Lower leg skin (tissue), 4 donors: ENCODE measurements at regions of chr12 and their contacts with region 1.

Region 1: DNA sequence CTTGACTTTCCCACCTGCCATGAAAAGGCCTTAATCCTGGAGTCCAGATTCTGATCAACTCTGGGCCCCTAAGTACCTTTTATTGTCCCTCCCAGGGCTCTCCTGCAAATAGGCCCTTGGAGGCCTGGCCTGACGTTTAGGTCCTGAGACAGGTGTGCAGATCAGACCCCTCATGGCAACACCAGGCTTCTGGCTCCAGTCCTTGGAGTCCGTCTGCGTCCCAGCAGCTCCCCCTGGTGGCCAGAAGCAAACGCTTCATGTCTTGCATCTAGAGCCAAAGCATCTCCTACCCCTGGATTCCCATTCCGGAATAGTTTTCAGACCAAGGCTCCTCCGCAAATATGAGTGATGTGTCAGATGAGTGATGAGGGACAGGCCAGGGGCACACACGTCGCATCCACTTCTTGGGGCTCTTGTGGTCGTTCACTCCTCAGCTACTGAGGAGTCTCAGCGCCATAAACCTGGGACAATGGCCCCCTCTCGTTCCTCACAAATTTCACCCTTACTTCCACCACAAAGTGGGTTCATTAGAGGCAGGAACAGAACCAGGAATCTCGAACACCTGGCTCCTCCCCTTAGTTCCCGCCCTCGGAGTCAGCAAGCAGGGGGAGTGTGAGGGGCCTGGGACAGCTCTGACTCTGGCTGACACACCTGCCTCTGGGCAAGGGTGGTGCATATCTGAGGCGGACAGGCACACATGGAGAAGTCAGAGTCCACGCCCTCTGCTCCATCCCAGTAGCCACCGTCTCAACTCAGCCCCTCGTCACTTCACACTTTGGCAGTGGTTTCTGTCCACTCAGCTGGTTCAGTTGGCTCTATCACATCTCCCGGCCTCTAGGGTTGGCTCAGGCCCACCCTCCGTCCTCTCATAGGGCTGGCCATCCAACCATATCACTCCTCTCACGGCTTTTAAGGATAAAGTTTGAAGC is 77.9 kb upstream of the PWP1 start:
- DNase-seq: peak; percentile 47 to 94
- H3K4me3 ChIP-seq: no peak overlapping the region
- CTCF ChIP-seq: peak in 1 of 3 donors; percentile 84
- POLR2A ChIP-seq: no peak

Region 2: GRCh38 chr12:107131832-107132616 is 475.7 kb before region 1 on chr12:
- intact Hi-C with region 1: loop called (anchors 2 kb)
- DNase-seq: peak in 1 of 2 donors; percentile 20
- H3K4me3 ChIP-seq: no peak overlapping the region
- CTCF ChIP-seq: peak in 1 of 3 donors; percentile 44
- POLR2A ChIP-seq: no peak

Region 3: DNA sequence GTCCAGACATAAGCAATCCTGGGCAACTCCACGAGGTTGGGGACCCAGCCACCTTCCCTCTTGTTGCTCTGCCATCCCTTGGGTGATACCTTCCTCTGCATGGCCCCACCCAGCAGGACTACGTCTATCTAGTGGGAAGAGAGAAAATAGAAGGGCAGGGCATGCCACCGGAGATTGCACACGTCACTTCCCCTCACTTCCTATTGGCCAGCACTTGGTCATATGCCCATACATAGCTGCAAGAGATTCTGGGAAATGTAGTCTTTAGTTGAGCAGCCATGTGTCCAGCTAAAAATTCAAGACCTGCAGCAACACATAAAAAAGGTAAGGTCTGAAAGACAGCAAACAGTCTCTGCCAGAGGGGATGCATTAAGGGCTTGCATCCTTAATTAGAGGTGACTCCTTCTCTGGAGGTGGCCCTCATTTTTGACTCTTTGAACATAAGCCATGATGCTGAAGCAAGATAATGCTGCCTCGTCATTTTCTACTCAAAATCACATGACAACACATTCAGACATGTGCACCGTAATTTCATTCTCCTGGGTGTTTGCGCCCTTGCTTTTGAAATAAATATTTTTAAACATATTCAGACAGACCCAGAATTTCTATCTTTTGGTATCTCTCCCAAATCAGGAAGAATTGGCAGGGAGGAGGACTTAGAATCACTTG is 13.9 kb before region 1 on chr12:
- intact Hi-C with region 1: no loop called
- DNase-seq: no peak
- H3K4me3 ChIP-seq: no peak overlapping the region
- CTCF ChIP-seq: no peak
- POLR2A ChIP-seq: no peak

Region 4: GRCh38 chr12:107760809-107761501 is 153.2 kb after region 1 on chr12 and contains the start of gene PRDM4:
- intact Hi-C with region 1: no loop called
- DNase-seq: peak; percentile 87 to 98
- H3K4me3 ChIP-seq: peak within 1 kb of the TSS; percentile 77
- CTCF ChIP-seq: no peak
- POLR2A ChIP-seq: peak in 1 of 2 donors; percentile 81
- total RNA-seq, gene PRDM4: 15.4 to 37.3 (median 21.6) TPM